GM12878 (cell line): ENCODE measurements at regions of chrX and their contacts with region 1.

Region 1: DNA sequence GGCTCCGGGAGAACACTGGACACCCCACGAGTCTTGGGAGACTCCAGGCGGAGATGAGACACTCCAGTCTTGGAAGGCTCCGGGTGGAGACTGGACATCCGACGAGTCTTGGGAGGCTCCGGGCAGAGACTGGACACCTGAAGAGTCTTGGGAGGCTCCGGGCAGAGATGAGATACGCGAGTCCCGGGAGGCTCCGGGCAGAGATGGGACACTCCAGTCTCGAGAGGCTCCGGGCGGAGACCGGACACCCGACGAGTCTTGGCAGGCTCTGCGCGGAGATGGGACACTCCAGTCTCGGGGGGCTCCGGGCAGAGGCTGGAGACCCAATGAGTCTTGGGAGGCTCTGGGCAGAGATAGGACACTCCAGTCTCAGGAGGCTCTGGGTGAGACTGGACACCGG is 28.1 kb upstream of the LANCL3 start:
- DNase-seq: no peak
- ATAC-seq: no peak
- H3K4me3 ChIP-seq: no peak overlapping the region
- H3K27ac ChIP-seq: no peak overlapping the region
- H3K4me1 ChIP-seq: no peaks in the 10 kb centered on the region
- H3K27me3 ChIP-seq: no peaks in the 10 kb centered on the region
- CTCF ChIP-seq: no peak
- EP300 ChIP-seq: no peak
- POLR2A ChIP-seq: no peak
- RAD21 ChIP-seq: no peak

Region 2: DNA sequence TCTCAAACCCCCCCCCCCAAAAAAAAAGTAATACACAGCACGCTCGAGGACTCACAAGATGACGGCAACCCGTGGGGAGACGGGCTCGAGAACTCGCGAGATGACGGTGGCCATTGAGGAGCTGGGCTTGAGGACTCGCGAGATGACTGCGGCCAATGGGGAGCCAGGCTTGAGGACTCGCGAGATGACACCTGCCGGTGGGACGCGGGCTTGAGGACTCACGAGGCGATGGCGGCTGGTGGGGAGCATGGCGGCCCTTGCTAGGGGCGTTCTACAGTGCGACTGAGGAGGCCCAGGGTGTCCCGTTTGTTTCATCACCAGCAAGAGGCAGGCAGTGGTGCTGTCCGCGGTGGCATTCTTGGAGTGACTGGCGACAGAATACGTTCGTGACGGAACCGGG is 1917.6 kb before region 1 on chrX:
- CTCF ChIA-PET with region 1: no interaction called
- POLR2A ChIA-PET with region 1: no interaction called
- RAD21 ChIA-PET with region 1: no interaction called
- SMC1A ChIA-PET with region 1: no interaction called
- in situ Hi-C with region 1: no loop called
- intact Hi-C with region 1: no loop called
- DNase-seq: no peak
- ATAC-seq: no peak
- H3K4me3 ChIP-seq: no peak overlapping the region
- H3K27ac ChIP-seq: no peak overlapping the region
- H3K4me1 ChIP-seq: no peaks in the 10 kb centered on the region
- H3K27me3 ChIP-seq: no peaks in the 10 kb centered on the region
- CTCF ChIP-seq: no peak
- EP300 ChIP-seq: no peak
- POLR2A ChIP-seq: no peak
- RAD21 ChIP-seq: no peak

Region 3: DNA sequence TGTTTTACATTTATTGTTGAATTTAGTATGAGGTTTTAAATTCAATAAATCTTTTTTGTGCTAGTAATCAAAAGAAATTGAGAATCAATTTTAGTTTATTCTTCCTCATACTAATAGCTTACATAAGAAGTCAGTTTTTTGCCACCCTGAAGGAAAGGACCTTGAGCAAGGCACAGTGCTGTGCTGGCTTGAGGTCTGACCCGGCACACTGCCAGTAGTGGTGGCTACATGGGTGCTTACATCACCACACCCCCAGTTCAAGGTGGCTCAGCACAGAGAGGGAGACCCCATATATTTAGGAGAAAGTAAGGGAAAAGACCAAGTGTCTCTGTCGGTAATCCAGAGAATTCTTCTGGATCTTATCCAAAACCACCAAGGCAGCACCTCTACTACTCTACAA is 57.9 kb before region 1 on chrX:
- CTCF ChIA-PET with region 1: no interaction called
- POLR2A ChIA-PET with region 1: no interaction called
- RAD21 ChIA-PET with region 1: no interaction called
- SMC1A ChIA-PET with region 1: no interaction called
- in situ Hi-C with region 1: no loop called
- intact Hi-C with region 1: loop called (anchors 10 kb)
- DNase-seq: no peak
- ATAC-seq: no peak
- H3K4me3 ChIP-seq: no peak overlapping the region
- H3K27ac ChIP-seq: no peak overlapping the region
- H3K4me1 ChIP-seq: no peaks in the 10 kb centered on the region
- H3K27me3 ChIP-seq: no peaks in the 10 kb centered on the region
- CTCF ChIP-seq: no peak
- EP300 ChIP-seq: no peak
- POLR2A ChIP-seq: no peak
- RAD21 ChIP-seq: no peak

Region 4: DNA sequence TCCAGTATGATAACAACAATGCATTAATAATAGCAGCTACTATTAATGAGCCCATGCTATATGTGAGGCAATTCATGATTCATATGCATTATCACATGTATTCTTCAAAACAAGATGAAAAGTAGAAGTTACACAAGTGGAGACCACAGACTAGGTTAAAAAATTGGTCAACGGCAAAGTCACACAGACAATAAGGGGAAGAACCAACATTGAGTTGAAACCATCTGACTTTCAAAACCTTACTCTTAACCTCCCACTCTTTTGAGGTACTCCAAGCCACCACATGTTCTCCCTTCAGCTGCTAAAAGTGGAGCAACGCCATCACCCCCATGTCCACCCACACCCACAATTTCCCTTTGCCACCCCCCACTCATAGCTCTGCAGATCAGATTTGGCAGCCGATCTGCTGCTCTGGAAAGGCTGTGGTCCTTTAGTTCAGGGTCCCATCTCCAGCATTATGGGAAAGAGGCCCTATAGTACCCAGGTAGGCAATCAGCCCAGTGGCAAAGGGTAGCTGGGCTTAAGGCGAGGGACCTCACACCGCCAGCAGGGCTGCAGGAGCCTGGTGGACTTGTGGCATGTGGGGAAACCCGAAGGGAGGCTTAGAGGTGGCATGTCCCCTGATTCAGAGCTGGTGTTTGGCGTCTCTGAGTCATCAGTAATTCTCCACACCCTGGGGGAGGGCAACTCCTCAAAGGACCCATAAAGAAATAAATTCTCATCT is 203.1 kb after region 1 on chrX:
- CTCF ChIA-PET with region 1: no interaction called
- POLR2A ChIA-PET with region 1: no interaction called
- RAD21 ChIA-PET with region 1: no interaction called
- SMC1A ChIA-PET with region 1: no interaction called
- in situ Hi-C with region 1: no loop called
- intact Hi-C with region 1: no loop called
- DNase-seq: peak; percentile 72
- ATAC-seq: peak; percentile 88
- H3K4me3 ChIP-seq: no peak overlapping the region
- H3K27ac ChIP-seq: peak overlapping the region; percentile 69
- H3K4me1 ChIP-seq: peaks cover 15% of the 10 kb centered on the region
- H3K27me3 ChIP-seq: no peaks in the 10 kb centered on the region
- CTCF ChIP-seq: no peak
- EP300 ChIP-seq: peak in 1 of 2 experiments; percentile 59; a peak in 2 of 4 replicates
- POLR2A ChIP-seq: no peak
- RAD21 ChIP-seq: no peak